ENCODE measurements at regions of chr1 and their contacts with region 1.

Region 1: GRCh38 chr1:198641501-198641900 is 2.7 kb downstream of the PTPRC start:
- DNase-seq: no peak
- H3K4me3 Mint-ChIP-seq: peak overlapping the region; percentile 87
- H3K27ac Mint-ChIP-seq: peak overlapping the region; percentile 91
- H3K4me1 Mint-ChIP-seq: peaks cover 50% of the 10 kb centered on the region
- H3K27me3 Mint-ChIP-seq: no peaks in the 10 kb centered on the region

Region 2: DNA sequence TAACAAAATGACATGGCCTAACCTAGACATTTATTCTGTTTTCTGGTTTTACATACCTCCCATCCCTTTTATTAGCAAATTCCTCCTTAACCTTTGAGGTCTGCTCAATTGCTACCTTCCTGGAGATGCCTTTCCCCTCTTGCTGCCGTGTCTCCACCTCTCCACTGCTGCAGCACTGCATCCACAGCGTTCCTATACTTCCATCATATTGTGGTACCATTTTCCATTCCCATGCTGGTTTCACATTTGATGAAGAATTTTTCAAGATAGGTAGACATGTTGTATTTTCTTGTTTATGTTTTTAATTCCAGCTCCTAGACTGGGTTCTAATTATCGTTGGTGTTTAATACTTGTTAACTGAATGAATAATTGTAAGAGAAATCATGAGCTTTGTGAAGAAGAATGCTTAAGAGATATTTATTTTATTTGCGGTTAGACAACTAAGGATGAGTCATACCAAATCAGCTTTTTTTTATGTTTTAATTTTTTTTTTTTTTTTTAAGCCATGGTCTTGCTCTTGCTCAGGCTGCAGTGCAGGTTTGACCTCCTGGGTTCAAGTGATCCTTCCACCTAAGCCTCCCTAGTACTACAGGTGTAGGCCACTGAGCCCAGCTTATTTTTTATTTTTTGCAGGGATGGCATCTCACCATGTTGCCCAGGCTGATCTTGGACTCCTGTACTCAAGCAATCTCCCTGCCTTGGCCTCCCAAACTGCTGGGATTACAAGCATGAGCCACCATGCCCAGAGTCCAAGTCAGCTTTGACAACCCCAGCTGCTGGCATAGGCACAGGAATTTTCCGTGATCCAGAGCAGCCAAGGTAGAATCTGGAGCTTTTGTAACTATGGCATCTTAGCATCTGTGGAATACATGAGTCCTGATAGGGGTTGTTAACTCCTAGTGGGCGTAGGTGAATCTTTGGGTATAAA is 145.0 kb before region 1 on chr1:
- intact Hi-C with region 1: no loop called
- DNase-seq: no peak
- H3K4me3 Mint-ChIP-seq: no peak overlapping the region
- H3K27ac Mint-ChIP-seq: no peak overlapping the region
- H3K4me1 Mint-ChIP-seq: peaks cover 8% of the 10 kb centered on the region
- H3K27me3 Mint-ChIP-seq: no peaks in the 10 kb centered on the region

Region 3: GRCh38 chr1:198612471-198613260 is 28.8 kb before region 1 on chr1:
- intact Hi-C with region 1: loop called (anchors 1 kb)
- DNase-seq: no peak
- H3K4me3 Mint-ChIP-seq: peak overlapping the region; percentile 75
- H3K27ac Mint-ChIP-seq: peak overlapping the region; percentile 86
- H3K4me1 Mint-ChIP-seq: peaks cover 59% of the 10 kb centered on the region
- H3K27me3 Mint-ChIP-seq: no peaks in the 10 kb centered on the region

Region 4: DNA sequence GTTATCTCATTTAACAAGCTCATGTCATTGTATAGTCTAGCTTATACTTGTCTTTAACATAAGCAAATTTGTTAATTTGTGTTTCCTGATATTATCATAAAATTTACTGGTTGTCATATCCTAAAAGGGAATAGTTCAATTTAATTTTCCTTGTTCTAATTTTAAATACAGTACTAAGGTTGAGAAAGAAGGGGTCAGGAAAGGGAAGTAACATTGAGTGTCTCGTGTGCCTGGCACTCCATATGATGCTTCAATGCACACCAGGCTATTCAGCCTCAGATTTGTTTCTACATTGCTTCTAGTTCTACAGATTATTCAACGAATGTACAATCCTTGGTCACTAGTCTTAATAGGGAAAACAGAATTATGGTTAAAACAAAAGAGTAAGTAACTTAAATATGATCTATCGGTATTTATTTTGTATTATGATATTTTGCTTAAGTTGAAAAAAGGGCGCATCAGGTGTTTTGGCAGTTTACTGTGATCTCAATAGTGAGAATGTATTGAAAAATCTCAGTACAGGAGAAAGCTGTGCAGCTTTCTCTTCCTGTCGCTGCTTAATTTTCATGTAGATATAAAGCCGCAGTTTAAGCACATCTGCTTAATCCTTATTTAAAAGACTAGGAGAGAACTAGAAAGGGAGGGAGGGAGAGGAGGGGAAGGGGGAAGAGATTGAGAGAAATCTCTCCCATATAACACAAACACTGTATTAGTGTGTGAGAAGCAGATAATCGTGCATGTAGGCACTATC is 10.3 kb after region 1 on chr1:
- intact Hi-C with region 1: loop called (anchors 1 kb)
- DNase-seq: no peak
- H3K4me3 Mint-ChIP-seq: peak overlapping the region; percentile 73
- H3K27ac Mint-ChIP-seq: peak overlapping the region; percentile 67
- H3K4me1 Mint-ChIP-seq: peaks cover 70% of the 10 kb centered on the region
- H3K27me3 Mint-ChIP-seq: no peaks in the 10 kb centered on the region

Region 5: DNA sequence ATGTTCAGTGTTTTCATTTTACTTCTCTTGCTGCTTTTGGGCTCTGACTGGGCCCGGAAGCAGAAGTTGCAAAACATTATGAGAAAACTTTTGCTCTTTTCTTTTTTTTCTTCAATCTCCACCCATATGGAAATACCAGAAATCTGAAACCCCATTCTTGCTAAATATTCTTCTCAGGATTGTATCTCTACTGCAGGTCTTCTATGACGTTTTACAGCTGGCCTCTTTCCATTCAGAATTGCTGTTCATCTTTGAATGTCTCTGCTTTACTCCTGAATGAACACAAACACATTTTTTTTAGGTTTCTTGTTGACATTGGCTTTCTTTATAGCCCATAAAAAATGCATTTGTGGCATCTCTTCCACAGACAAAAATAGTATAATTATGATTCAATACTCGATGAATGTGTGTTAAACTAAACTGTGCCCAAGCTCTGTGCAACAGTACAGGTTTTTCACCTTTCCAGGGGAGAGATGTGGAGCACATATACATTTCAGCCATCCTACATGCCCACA is 16.1 kb after region 1 on chr1:
- intact Hi-C with region 1: loop called (anchors 1 kb)
- DNase-seq: no peak
- H3K4me3 Mint-ChIP-seq: peak overlapping the region; percentile 78
- H3K27ac Mint-ChIP-seq: peak overlapping the region; percentile 95
- H3K4me1 Mint-ChIP-seq: peaks cover 55% of the 10 kb centered on the region
- H3K27me3 Mint-ChIP-seq: no peaks in the 10 kb centered on the region

Region 6: GRCh38 chr1:198669023-198669698 is 27.7 kb after region 1 on chr1:
- intact Hi-C with region 1: loop called (anchors 1 kb)
- DNase-seq: peak; percentile 56
- H3K4me3 Mint-ChIP-seq: peak overlapping the region; percentile 49
- H3K27ac Mint-ChIP-seq: peak overlapping the region; percentile 83
- H3K4me1 Mint-ChIP-seq: peaks cover 82% of the 10 kb centered on the region
- H3K27me3 Mint-ChIP-seq: no peaks in the 10 kb centered on the region

Measured in activated T-helper 2 cell treated with anti-CD3 and anti-CD28 coated beads, Interferon-gamma antibody, Interleukin-2, Interleukin-4, amounts not matched to agents 10 μg/mL and 5 μg/mL and 100 μg/mL, durations not matched to agents 14 hours and 24 hours and 36 hours (primary cell).